Mammary epithelial cell (primary cell): ENCODE measurements at regions of chr15 and their contacts with region 1.

Region 1: GRCh38 chr15:92714477-92715401 is 59.2 kb upstream of the FAM174B start:
- DNase-seq: peak; percentile 51
- H3K4me3 ChIP-seq: peak overlapping the region; percentile 5 to 50 (median 50)
- H3K27ac ChIP-seq: no peak overlapping the region
- H3K4me1 ChIP-seq: peaks cover 11% of the 10 kb centered on the region
- H3K27me3 ChIP-seq: no peaks in the 10 kb centered on the region
- CTCF ChIP-seq: peak; percentile 85 to 90

Region 2: DNA sequence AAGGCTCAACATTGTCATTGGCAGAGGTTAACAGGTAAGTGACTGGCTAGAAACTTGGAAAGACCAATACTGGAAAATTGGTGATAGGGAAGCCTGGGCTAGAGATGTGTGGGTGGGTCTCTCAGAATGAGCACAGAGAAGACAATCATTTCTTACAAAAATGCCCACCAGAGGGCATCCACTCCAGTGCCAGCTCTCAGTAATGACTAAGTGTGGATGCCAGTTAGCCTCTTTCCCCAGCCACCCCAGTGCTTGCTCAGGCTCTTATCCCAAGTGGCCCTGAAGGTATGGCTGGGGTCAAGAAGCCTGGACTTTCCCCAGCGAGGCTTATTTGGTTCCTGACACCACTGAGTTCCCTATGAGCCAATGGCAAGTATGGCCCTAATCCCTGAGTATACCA is 437.0 kb before region 1 on chr15:
- CTCF ChIA-PET with region 1: no interaction called
- dilution Hi-C with region 1: no loop called
- in situ Hi-C with region 1: loop called in 1 of 2 experiments (anchors 25 kb)
- intact Hi-C with region 1: loop called (anchors 1 kb)
- DNase-seq: peak; percentile 37
- H3K4me3 ChIP-seq: no peak overlapping the region
- H3K27ac ChIP-seq: no peak overlapping the region
- H3K4me1 ChIP-seq: no peaks in the 10 kb centered on the region
- H3K27me3 ChIP-seq: no peaks in the 10 kb centered on the region
- CTCF ChIP-seq: peak; percentile 33 to 60

Region 3: DNA sequence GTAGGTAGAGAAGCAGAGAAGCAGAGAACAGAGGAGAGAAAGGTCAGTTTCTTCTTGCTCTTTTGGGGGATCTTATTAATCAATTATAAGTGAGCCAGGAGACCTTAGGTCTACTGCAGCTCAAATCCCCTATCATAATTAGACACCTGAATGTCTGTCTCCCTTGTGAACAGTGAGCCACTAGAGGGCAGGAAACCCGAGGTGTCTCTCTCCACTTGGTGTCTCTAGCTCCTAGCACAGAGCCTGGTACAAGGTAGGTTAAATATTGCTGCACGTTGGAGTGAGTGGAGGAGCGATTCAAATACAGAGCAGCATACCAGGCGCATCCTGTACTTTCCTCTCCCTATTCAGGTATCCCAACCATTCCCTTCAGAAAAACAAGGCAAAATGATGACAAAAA is 323.1 kb before region 1 on chr15:
- CTCF ChIA-PET with region 1: interaction called, 4 read pairs
- dilution Hi-C with region 1: no loop called
- in situ Hi-C with region 1: no loop called
- intact Hi-C with region 1: loop called (anchors 1 kb)
- DNase-seq: peak; percentile 53
- H3K4me3 ChIP-seq: no peak overlapping the region
- H3K27ac ChIP-seq: no peak overlapping the region
- H3K4me1 ChIP-seq: peaks cover 9% of the 10 kb centered on the region
- H3K27me3 ChIP-seq: peaks cover 27% of the 10 kb centered on the region
- CTCF ChIP-seq: peak; percentile 68 to 77

Region 4: GRCh38 chr15:92521624-92522008 is 193.1 kb before region 1 on chr15:
- CTCF ChIA-PET with region 1: interaction called, 9 read pairs
- dilution Hi-C with region 1: no loop called
- in situ Hi-C with region 1: loop called (anchors 5 to 25 kb)
- intact Hi-C with region 1: loop called (anchors 1 kb)
- DNase-seq: peak; percentile 62
- H3K4me3 ChIP-seq: no peak overlapping the region
- H3K27ac ChIP-seq: no peak overlapping the region
- H3K4me1 ChIP-seq: no peaks in the 10 kb centered on the region
- H3K27me3 ChIP-seq: no peaks in the 10 kb centered on the region
- CTCF ChIP-seq: peak; percentile 70 to 80

Region 5: GRCh38 chr15:92808978-92809879 is 94.5 kb after region 1 on chr15:
- CTCF ChIA-PET with region 1: no interaction called
- dilution Hi-C with region 1: no loop called
- in situ Hi-C with region 1: no loop called
- intact Hi-C with region 1: no loop called
- DNase-seq: peak; percentile 96
- H3K4me3 ChIP-seq: peak overlapping the region; percentile 41 to 66 (median 60)
- H3K27ac ChIP-seq: peak overlapping the region; percentile 98
- H3K4me1 ChIP-seq: peaks cover 37% of the 10 kb centered on the region
- H3K27me3 ChIP-seq: no peaks in the 10 kb centered on the region
- CTCF ChIP-seq: peak; percentile 74 to 76

Region 6: GRCh38 chr15:92917606-92918407 is 203.1 kb after region 1 on chr15:
- CTCF ChIA-PET with region 1: no interaction called
- dilution Hi-C with region 1: no loop called
- in situ Hi-C with region 1: no loop called
- intact Hi-C with region 1: loop called (anchors 10 kb)
- DNase-seq: peak; percentile 86
- H3K4me3 ChIP-seq: peak overlapping the region in 1 of 3 experiments; percentile 8
- H3K27ac ChIP-seq: peak overlapping the region; percentile 83
- H3K4me1 ChIP-seq: peaks cover 61% of the 10 kb centered on the region
- H3K27me3 ChIP-seq: no peaks in the 10 kb centered on the region
- CTCF ChIP-seq: peak; percentile 75 to 87